IMR-90 (cell line): ENCODE measurements at regions of chr6 and their contacts with region 1.

Region 1: GRCh38 chr6:52419809-52420670 is at the start of gene EFHC1:
- DNase-seq: peak; percentile 97
- ATAC-seq: peak; percentile 93
- H3K4me3 ChIP-seq: peak within 1 kb of the TSS; percentile 65
- H3K27ac ChIP-seq: peak within 1 kb of the TSS; percentile 95
- H3K4me1 ChIP-seq: peaks cover 17% of the 10 kb centered on the region
- H3K27me3 ChIP-seq: no peaks in the 10 kb centered on the region
- CTCF ChIP-seq: no peak
- POLR2A ChIP-seq: peak; percentile 91
- RAD21 ChIP-seq: no peak
- total RNA-seq, gene EFHC1: 14.0 and 14.7 TPM in 2 replicates

Region 2: GRCh38 chr6:52407467-52407866 is 12.6 kb before region 1 on chr6:
- CTCF ChIA-PET with region 1: interaction called, 23 read pairs
- POLR2A ChIA-PET with region 1: no interaction called
- dilution Hi-C with region 1: no loop called
- in situ Hi-C with region 1: no loop called
- intact Hi-C with region 1: no loop called
- DNase-seq: peak; percentile 61
- ATAC-seq: peak; percentile 52
- H3K4me3 ChIP-seq: no peak overlapping the region
- H3K27ac ChIP-seq: no peak overlapping the region
- H3K4me1 ChIP-seq: peaks cover 9% of the 10 kb centered on the region
- H3K27me3 ChIP-seq: no peaks in the 10 kb centered on the region
- CTCF ChIP-seq: peak; percentile 64
- POLR2A ChIP-seq: no peak
- RAD21 ChIP-seq: peak; percentile 74

Region 3: DNA sequence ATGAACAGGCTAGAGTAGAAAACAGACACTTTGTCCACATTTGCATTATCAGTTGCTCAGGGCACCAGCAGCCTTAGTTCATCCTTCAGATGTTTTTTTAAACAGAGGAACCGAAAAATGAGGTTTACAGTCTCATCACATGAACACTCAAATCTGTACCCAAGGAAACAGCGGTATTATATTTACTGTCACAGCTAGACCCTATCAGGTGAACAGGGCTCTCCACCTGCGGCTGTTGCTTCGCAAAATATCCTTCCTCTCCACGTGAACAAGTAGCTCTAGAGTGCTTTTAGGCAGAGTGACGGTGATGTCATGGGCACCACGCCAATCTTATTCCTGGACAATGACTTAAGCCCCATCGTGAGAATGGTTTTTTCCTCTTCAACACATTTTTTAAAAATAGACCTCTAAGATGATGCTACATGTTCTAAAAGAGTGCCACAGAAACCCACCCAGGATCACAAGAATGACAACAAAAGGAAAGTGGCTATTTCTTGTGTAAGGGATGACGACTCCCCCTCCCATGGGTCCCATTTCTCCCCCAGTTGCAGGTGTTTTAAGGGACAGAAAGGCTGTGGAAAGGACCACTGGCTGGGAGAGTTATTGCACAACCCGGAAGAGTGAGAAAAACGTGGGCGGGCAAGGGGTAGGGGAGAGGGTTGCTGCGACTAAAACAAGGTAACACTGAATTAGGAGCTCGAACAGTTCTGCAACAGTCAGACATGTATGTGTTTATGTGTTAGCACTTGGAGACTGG is 77.8 kb after region 1 on chr6:
- CTCF ChIA-PET with region 1: interaction called, 3 read pairs
- POLR2A ChIA-PET with region 1: interaction called, 3 read pairs
- dilution Hi-C with region 1: no loop called
- in situ Hi-C with region 1: no loop called
- intact Hi-C with region 1: loop called (anchors 5 kb)
- DNase-seq: peak; percentile 58
- ATAC-seq: no peak
- H3K4me3 ChIP-seq: no peak overlapping the region
- H3K27ac ChIP-seq: no peak overlapping the region
- H3K4me1 ChIP-seq: peaks cover 16% of the 10 kb centered on the region
- H3K27me3 ChIP-seq: no peaks in the 10 kb centered on the region
- CTCF ChIP-seq: no peak
- POLR2A ChIP-seq: no peak
- RAD21 ChIP-seq: no peak

Region 4: GRCh38 chr6:52577022-52577777 is 157.2 kb after region 1 on chr6 and contains the start of gene TRAM2:
- CTCF ChIA-PET with region 1: no interaction called
- POLR2A ChIA-PET with region 1: interaction called, 6 read pairs
- dilution Hi-C with region 1: no loop called
- in situ Hi-C with region 1: no loop called
- intact Hi-C with region 1: loop called (anchors 1 kb)
- DNase-seq: peak; percentile 74
- ATAC-seq: peak; percentile 85
- H3K4me3 ChIP-seq: peak within 1 kb of the TSS; percentile 93
- H3K27ac ChIP-seq: peak within 1 kb of the TSS; percentile 92
- H3K4me1 ChIP-seq: peaks cover 17% of the 10 kb centered on the region
- H3K27me3 ChIP-seq: no peaks in the 10 kb centered on the region
- CTCF ChIP-seq: 0 out of 2 replicates have a peak, but pooled peaks have one; percentile 2
- POLR2A ChIP-seq: peak; percentile 76
- RAD21 ChIP-seq: no peak
- total RNA-seq, gene TRAM2: 77.2 and 81.1 TPM in 2 replicates

Region 5: GRCh38 chr6:52664186-52664990 is 244.3 kb after region 1 on chr6:
- CTCF ChIA-PET with region 1: interaction called, 6 read pairs
- POLR2A ChIA-PET with region 1: interaction called, 3 read pairs
- dilution Hi-C with region 1: loop called (anchors 25 kb)
- in situ Hi-C with region 1: loop called (anchors 5 kb)
- intact Hi-C with region 1: loop called (anchors 1 kb)
- DNase-seq: peak; percentile 96
- ATAC-seq: peak; percentile 97
- H3K4me3 ChIP-seq: peak overlapping the region; percentile 81
- H3K27ac ChIP-seq: peak overlapping the region; percentile 56
- H3K4me1 ChIP-seq: peaks cover 4% of the 10 kb centered on the region
- H3K27me3 ChIP-seq: no peaks in the 10 kb centered on the region
- CTCF ChIP-seq: no peak
- POLR2A ChIP-seq: peak; percentile 94
- RAD21 ChIP-seq: no peak

Region 6: DNA sequence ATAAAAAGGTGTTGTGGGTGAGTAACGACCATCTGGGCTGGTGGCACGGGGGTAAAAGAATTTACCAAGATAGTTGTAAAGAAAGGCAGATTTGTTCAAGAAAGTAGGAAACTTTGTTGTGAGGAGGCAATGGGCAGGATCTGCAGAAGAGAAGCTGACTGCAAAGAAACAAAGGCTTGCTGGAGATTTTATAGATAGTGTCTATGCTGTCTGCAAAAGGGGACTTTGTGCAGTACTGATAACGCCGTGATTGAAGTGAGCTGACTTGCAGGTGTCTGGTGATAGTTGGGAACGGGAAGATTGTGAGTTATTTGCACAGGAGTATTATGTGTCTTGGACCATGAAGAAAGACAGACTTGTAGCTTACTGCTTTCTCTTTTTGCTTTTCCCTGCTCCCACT is 526.3 kb after region 1 on chr6:
- CTCF ChIA-PET with region 1: no interaction called
- POLR2A ChIA-PET with region 1: no interaction called
- dilution Hi-C with region 1: no loop called
- in situ Hi-C with region 1: no loop called
- intact Hi-C with region 1: no loop called
- DNase-seq: no peak
- ATAC-seq: no peak
- H3K4me3 ChIP-seq: no peak overlapping the region
- H3K27ac ChIP-seq: no peak overlapping the region
- H3K4me1 ChIP-seq: no peaks in the 10 kb centered on the region
- H3K27me3 ChIP-seq: peaks cover 8% of the 10 kb centered on the region; the same call in 1 of the 2 replicates
- CTCF ChIP-seq: no peak
- POLR2A ChIP-seq: no peak
- RAD21 ChIP-seq: no peak